ENCODE measurements at regions of chr10 and their contacts with region 1.

Region 1: GRCh38 chr10:77837240-77837924 is 89.2 kb downstream of the DLG5 start:
- DNase-seq: peak; percentile 83
- H3K4me3 Mint-ChIP-seq: no peak overlapping the region
- H3K27ac Mint-ChIP-seq: peak overlapping the region; percentile 66
- H3K4me1 Mint-ChIP-seq: peaks cover 28% of the 10 kb centered on the region
- H3K27me3 Mint-ChIP-seq: no peaks in the 10 kb centered on the region

Region 2: DNA sequence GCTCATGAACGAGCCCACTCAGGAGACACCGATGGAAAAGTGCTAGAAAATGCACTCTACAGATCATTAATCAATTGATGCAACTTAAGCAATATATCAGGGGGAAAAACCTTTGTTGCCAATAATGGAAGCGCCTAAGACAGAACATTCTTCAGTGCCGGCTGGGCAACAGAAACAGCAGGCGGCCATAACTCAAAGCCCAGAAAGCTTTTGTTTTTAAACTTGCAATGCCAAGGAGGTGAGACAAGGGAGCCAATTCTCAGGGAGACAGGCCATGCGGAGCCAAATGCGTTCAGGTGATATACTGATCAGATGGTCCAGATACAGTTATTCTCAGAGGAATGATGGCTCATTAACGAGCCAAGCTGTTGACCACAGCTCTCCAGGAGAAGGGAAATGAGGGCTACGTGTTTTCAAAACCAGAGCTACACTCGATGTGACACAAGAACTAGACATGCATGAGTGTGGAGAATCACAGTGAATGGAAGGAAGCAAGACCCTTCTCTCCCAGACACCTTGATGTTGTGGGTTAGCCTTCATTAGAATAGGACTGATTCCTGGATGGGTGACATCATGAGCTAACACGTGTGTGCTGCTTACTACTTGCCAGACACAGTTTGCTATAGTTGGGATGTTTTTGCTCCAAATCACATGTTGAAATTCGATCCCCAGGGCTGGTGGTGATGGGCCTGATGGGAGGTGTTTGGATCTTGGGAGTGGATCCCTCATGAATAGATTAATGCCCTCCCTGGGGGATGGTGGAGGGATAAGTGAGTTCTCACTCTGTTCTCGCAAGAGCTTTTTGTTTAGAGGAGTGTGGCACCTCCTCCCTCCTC is 120.7 kb before region 1 on chr10:
- CTCF ChIA-PET with region 1: interaction called, 58 read pairs
- POLR2A ChIA-PET with region 1: interaction called, 3 read pairs
- DNase-seq: no peak
- H3K4me3 Mint-ChIP-seq: no peak overlapping the region
- H3K27ac Mint-ChIP-seq: no peak overlapping the region
- H3K4me1 Mint-ChIP-seq: peaks cover 4% of the 10 kb centered on the region
- H3K27me3 Mint-ChIP-seq: peaks cover 18% of the 10 kb centered on the region

Region 3: GRCh38 chr10:77721815-77722214 is 115.6 kb before region 1 on chr10:
- CTCF ChIA-PET with region 1: interaction called, 31 read pairs
- POLR2A ChIA-PET with region 1: no interaction called
- DNase-seq: no peak
- H3K4me3 Mint-ChIP-seq: no peak overlapping the region
- H3K27ac Mint-ChIP-seq: no peak overlapping the region
- H3K4me1 Mint-ChIP-seq: peaks cover 5% of the 10 kb centered on the region
- H3K27me3 Mint-ChIP-seq: peaks cover 7% of the 10 kb centered on the region

Measured in activated CD4-positive, alpha-beta memory T cell treated with anti-CD3 and anti-CD28 coated beads, Interleukin-2, amount 10 ng/mL, durations not matched to agents 7 days and 5 days (primary cell).